Heart left ventricle (tissue), 16 donors: ENCODE measurements at regions of chr3 and their contacts with region 1.

Region 1: DNA sequence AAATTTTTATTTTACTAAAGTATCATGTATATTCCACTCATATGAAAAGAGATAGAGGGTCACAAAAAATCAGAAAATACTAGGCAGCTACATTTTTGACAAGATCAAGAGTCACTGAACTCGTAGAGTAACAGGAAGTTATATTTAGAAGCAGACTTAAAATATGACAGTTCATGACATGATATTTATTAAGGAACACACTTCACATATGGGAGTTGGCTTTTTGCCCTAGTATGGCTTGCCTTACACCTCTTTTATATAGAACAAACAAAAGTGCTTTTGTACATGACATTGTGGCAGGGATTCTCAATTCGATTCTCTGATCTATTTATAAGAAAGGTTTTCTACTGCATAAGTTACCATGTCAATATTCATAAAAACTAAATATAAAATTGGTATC is 80.1 kb upstream of the GBE1 start:
- DNase-seq: no peak
- ATAC-seq: no peak
- H3K4me3 ChIP-seq: no peak overlapping the region
- H3K27ac ChIP-seq: no peak overlapping the region
- H3K4me1 ChIP-seq: peaks cover 0 to 46% (median 24%) of the 10 kb centered on the region in 12 donors
- H3K27me3 ChIP-seq: no peaks in the 10 kb centered on the region
- CTCF ChIP-seq: no peak
- POLR2A ChIP-seq: no peak

Region 2: DNA sequence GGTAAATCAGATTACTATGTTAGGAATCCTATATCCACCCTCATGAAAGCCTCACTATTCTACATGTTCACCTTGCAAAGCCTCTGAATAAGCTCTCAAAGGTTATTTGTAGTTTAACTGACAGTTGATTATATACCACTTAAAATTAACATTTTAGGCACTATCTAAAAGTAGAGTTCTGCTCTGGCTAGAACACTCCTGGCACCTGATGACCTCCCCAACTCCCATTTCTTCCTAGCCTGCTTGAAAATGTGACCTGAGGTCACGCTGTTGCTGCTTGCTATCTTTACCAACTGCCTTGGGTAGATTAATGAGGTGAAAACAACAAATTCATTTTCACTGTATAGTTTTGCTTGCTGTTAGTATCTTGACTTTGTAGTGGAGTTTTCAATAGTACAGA is 300.8 kb before region 1 on chr3:
- intact Hi-C with region 1: no loop called
- DNase-seq: no peak
- ATAC-seq: peak in 2 of 4 donors; percentile 29 to 53
- H3K4me3 ChIP-seq: no peak overlapping the region
- H3K27ac ChIP-seq: no peak overlapping the region
- H3K4me1 ChIP-seq: peaks cover 0 to 4% (median 0%) of the 10 kb centered on the region in 12 donors
- H3K27me3 ChIP-seq: no peaks in the 10 kb centered on the region
- CTCF ChIP-seq: no peak
- POLR2A ChIP-seq: no peak

Region 3: GRCh38 chr3:81788610-81789009 is 52.9 kb before region 1 on chr3:
- intact Hi-C with region 1: loop called in 1 of 10 experiments (anchors 10 kb)
- DNase-seq: no peak
- ATAC-seq: peak; percentile 90 to 97 (median 94)
- H3K4me3 ChIP-seq: peak overlapping the region in 1 of 12 donors; percentile 27
- H3K27ac ChIP-seq: peak overlapping the region in 11 of 12 donors; percentile 44 to 78 (median 64)
- H3K4me1 ChIP-seq: peaks cover 0 to 27% (median 21%) of the 10 kb centered on the region in 12 donors
- H3K27me3 ChIP-seq: no peaks in the 10 kb centered on the region
- CTCF ChIP-seq: no peak
- POLR2A ChIP-seq: peak in 1 of 2 donors; percentile 9

Region 4: GRCh38 chr3:81829937-81830336 is 11.6 kb before region 1 on chr3:
- intact Hi-C with region 1: no loop called
- DNase-seq: no peak
- ATAC-seq: no peak
- H3K4me3 ChIP-seq: no peak overlapping the region
- H3K27ac ChIP-seq: no peak overlapping the region
- H3K4me1 ChIP-seq: peaks cover 0 to 2% (median 0%) of the 10 kb centered on the region in 12 donors
- H3K27me3 ChIP-seq: no peaks in the 10 kb centered on the region
- CTCF ChIP-seq: no peak
- POLR2A ChIP-seq: no peak

Region 5: GRCh38 chr3:81871358-81872155 is 30.0 kb after region 1 on chr3:
- intact Hi-C with region 1: no loop called
- DNase-seq: no peak
- ATAC-seq: no peak
- H3K4me3 ChIP-seq: no peak overlapping the region
- H3K27ac ChIP-seq: no peak overlapping the region
- H3K4me1 ChIP-seq: peaks cover 0 to 4% (median 0%) of the 10 kb centered on the region in 12 donors
- H3K27me3 ChIP-seq: no peaks in the 10 kb centered on the region
- CTCF ChIP-seq: peak in 8 of 12 donors; percentile 5 to 45 (median 32)
- POLR2A ChIP-seq: no peak